ENCODE measurements at regions of chr6 and their contacts with region 1.

Region 1: GRCh38 chr6:15691250-15691869 is 28.5 kb upstream of the DTNBP1 start:
- DNase-seq: peak; percentile 74
- ATAC-seq: peak; percentile 98
- H3K4me3 ChIP-seq: no peak overlapping the region
- H3K27ac ChIP-seq: no peak overlapping the region
- H3K4me1 ChIP-seq: no peaks in the 10 kb centered on the region; the same call in 1 of the 2 replicates
- H3K27me3 ChIP-seq: no peaks in the 10 kb centered on the region
- CTCF ChIP-seq: peak; percentile 100; a peak in 5 of 6 replicates
- EP300 ChIP-seq: 0 out of 4 replicates have a peak, but pooled peaks of 1 of the 2 experiments have one; percentile 8
- POLR2A ChIP-seq: no peak
- RAD21 ChIP-seq: peak; percentile 100

Region 2: GRCh38 chr6:15588971-15589634 is 102.3 kb before region 1 on chr6:
- CTCF ChIA-PET with region 1: no interaction called
- POLR2A ChIA-PET with region 1: no interaction called
- RAD21 ChIA-PET with region 1: no interaction called
- SMC1A ChIA-PET with region 1: no interaction called
- in situ Hi-C with region 1: no loop called
- intact Hi-C with region 1: no loop called
- DNase-seq: no peak
- ATAC-seq: peak; percentile 38; the same call in 2 of the 3 replicates
- H3K4me3 ChIP-seq: no peak overlapping the region
- H3K27ac ChIP-seq: no peak overlapping the region
- H3K4me1 ChIP-seq: no peaks in the 10 kb centered on the region; the same call in 1 of the 2 replicates
- H3K27me3 ChIP-seq: no peaks in the 10 kb centered on the region
- CTCF ChIP-seq: no peak
- EP300 ChIP-seq: no peak
- POLR2A ChIP-seq: no peak
- RAD21 ChIP-seq: no peak

Region 3: DNA sequence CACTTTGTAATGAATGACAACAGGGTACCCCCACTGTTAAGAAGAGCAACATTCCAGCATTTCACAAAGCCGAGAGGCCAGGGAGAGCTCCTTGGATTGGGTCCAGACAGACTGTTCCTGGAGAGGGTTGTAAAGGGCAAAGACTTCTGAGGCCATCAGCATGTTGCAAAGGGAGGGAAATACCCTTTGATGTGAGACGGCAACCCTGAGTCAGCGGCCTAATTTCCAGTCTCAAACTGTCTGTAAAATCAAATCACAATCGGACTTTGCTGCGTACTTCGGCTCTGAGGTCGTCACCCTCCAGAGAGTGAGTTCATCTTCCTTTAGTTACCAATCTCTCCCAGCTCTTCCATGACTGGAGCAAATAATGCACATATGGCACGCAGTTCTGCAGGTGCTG is 72.5 kb after region 1 on chr6:
- CTCF ChIA-PET with region 1: interaction called, 3 read pairs
- POLR2A ChIA-PET with region 1: interaction called, 4 read pairs
- RAD21 ChIA-PET with region 1: no interaction called
- SMC1A ChIA-PET with region 1: interaction called, 10 read pairs
- in situ Hi-C with region 1: no loop called
- intact Hi-C with region 1: no loop called
- DNase-seq: no peak
- ATAC-seq: no peak
- H3K4me3 ChIP-seq: no peak overlapping the region
- H3K27ac ChIP-seq: no peak overlapping the region
- H3K4me1 ChIP-seq: no peaks in the 10 kb centered on the region
- H3K27me3 ChIP-seq: no peaks in the 10 kb centered on the region
- CTCF ChIP-seq: no peak
- EP300 ChIP-seq: no peak
- POLR2A ChIP-seq: no peak
- RAD21 ChIP-seq: no peak

Region 4: GRCh38 chr6:15841937-15842705 is 150.8 kb after region 1 on chr6:
- CTCF ChIA-PET with region 1: interaction called, 17 read pairs
- POLR2A ChIA-PET with region 1: no interaction called
- RAD21 ChIA-PET with region 1: interaction called, 4 read pairs
- SMC1A ChIA-PET with region 1: interaction called, 13 read pairs
- in situ Hi-C with region 1: no loop called
- intact Hi-C with region 1: no loop called
- DNase-seq: no peak
- ATAC-seq: no peak
- H3K4me3 ChIP-seq: no peak overlapping the region
- H3K27ac ChIP-seq: no peak overlapping the region
- H3K4me1 ChIP-seq: peaks cover 5% of the 10 kb centered on the region; the same call in 1 of the 2 replicates
- H3K27me3 ChIP-seq: no peaks in the 10 kb centered on the region
- CTCF ChIP-seq: no peak
- EP300 ChIP-seq: no peak
- POLR2A ChIP-seq: no peak
- RAD21 ChIP-seq: no peak

Region 5: DNA sequence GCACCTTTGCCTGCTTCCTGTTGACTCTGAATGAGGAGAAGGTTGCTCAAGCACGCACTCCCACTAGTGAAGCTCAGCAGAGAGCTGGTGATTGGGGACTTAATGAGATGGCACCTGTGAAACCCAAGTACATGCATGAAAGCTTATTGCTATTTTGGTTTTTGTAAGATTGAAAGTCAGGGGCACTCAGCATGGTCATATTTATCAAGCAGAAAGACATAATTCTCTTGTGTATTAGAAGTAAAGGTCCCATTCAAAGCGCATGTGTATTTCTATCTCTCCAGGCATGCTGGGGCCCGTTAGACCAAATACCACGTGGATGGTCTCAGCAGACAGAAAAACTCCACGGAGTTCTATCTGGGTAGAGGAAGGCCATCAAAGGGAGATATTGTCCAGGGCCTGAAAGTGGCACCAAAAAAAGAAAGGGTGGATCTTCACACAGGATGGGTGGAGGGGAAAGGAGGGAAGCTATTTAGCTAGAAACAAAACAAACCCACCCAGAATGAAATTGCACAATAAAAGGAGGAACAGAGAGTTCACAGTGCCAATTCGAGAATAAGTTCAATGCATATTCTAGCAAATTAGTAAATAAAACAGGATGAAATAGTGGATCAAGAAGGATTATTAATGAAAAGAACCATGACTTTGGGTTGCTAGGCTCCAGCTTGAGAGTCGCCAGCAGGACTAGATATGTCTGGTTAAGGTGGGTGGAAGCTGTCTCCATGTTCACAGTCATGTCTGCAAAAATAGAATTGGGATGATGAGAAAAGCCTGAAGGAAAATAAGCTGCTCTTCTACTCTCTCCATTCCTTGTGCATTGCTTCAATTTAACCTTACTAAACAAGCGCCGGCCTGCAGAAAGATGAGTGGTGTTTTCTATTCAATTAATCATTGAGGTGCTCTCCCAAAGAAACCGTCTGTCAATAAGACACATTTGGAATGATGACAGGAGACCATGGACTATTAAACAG is 196.4 kb after region 1 on chr6:
- CTCF ChIA-PET with region 1: interaction called, 5 read pairs
- POLR2A ChIA-PET with region 1: no interaction called
- RAD21 ChIA-PET with region 1: interaction called, 14 read pairs
- SMC1A ChIA-PET with region 1: interaction called, 7 read pairs
- in situ Hi-C with region 1: no loop called
- intact Hi-C with region 1: no loop called
- DNase-seq: no peak
- ATAC-seq: peak; percentile 90
- H3K4me3 ChIP-seq: no peak overlapping the region
- H3K27ac ChIP-seq: no peak overlapping the region
- H3K4me1 ChIP-seq: peaks cover 10% of the 10 kb centered on the region; the same call in 1 of the 2 replicates
- H3K27me3 ChIP-seq: no peaks in the 10 kb centered on the region
- CTCF ChIP-seq: no peak
- EP300 ChIP-seq: no peak; a peak in 1 of 4 replicates
- POLR2A ChIP-seq: no peak
- RAD21 ChIP-seq: no peak

Region 6: DNA sequence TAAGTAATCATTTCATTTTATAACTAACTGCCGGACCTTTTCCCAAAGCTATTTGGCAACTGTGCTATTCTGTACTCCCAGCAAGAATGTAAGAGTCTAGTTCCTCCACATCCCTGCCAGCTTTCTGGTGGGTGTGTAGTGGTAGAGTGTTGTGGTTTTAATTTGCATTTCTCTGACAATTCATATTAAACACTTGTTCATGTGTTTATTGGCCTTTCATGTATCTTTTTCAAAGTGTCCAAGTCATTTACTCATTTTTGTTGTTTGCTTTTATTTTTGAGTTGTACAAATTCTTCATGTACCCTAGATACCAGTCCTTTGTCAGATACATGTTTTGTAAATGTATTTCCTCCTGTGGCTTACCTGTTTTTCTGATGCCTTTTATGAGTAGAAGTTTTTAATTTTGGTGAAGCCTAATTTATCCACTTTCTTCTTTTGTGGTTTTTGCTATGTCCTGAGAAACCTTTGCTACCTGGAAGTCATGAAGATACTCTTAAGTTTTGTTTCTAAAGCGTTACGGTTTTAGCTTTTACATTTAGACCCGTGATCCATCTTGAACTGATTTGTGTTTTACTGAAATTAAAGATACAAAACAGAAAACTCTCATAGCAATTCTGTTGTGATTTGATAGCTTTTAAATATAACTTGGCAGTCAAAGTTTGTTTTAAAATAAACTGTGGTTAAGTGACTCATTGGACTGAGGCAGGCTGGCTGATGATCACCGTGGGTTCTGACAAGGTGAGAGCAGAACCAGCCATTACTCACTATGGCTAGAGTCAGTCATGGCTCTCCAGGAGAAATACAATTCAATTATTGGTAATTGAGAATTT is 445.5 kb after region 1 on chr6:
- CTCF ChIA-PET with region 1: interaction called, 131 read pairs
- POLR2A ChIA-PET with region 1: interaction called, 3 read pairs
- RAD21 ChIA-PET with region 1: interaction called, 26 read pairs
- SMC1A ChIA-PET with region 1: interaction called, 87 read pairs
- in situ Hi-C with region 1: no loop called
- intact Hi-C with region 1: no loop called
- DNase-seq: no peak
- ATAC-seq: peak; percentile 53
- H3K4me3 ChIP-seq: peak overlapping the region; percentile 47; the same call in 1 of the 2 replicates
- H3K27ac ChIP-seq: no peak overlapping the region
- H3K4me1 ChIP-seq: peaks cover 6% of the 10 kb centered on the region; the same call in 1 of the 2 replicates
- H3K27me3 ChIP-seq: no peaks in the 10 kb centered on the region
- CTCF ChIP-seq: no peak
- EP300 ChIP-seq: no peak
- POLR2A ChIP-seq: no peak
- RAD21 ChIP-seq: no peak

Region 7: GRCh38 chr6:16200321-16200883 is 509.0 kb after region 1 on chr6:
- CTCF ChIA-PET with region 1: interaction called, 37 read pairs
- POLR2A ChIA-PET with region 1: interaction called, 11 read pairs
- RAD21 ChIA-PET with region 1: interaction called, 52 read pairs
- SMC1A ChIA-PET with region 1: interaction called, 32 read pairs
- in situ Hi-C with region 1: no loop called
- intact Hi-C with region 1: no loop called
- DNase-seq: no peak
- ATAC-seq: no peak
- H3K4me3 ChIP-seq: no peak overlapping the region
- H3K27ac ChIP-seq: no peak overlapping the region
- H3K4me1 ChIP-seq: peaks cover 4% of the 10 kb centered on the region
- H3K27me3 ChIP-seq: no peaks in the 10 kb centered on the region
- CTCF ChIP-seq: no peak
- EP300 ChIP-seq: no peak
- POLR2A ChIP-seq: no peak
- RAD21 ChIP-seq: no peak